Endothelial cell of umbilical vein (primary cell): ENCODE measurements at regions of chr13 and their contacts with region 1.

Region 1: GRCh38 chr13:28324181-28324789 is 170.6 kb downstream of the FLT1 start:
- DNase-seq: peak; percentile 80
- H3K4me3 ChIP-seq: no peak overlapping the region
- H3K27ac ChIP-seq: peak overlapping the region; percentile 86
- H3K4me1 ChIP-seq: peaks cover 63% of the 10 kb centered on the region
- H3K27me3 ChIP-seq: no peaks in the 10 kb centered on the region
- CTCF ChIP-seq: peak; percentile 81 to 87
- POLR2A ChIP-seq: no peak

Region 2: GRCh38 chr13:28337166-28338005 is 13.1 kb after region 1 on chr13:
- CTCF ChIA-PET with region 1: interaction called, 22 read pairs
- POLR2A ChIA-PET with region 1: interaction called, 11 read pairs
- dilution Hi-C with region 1: no loop called
- intact Hi-C with region 1: loop called (anchors 1 kb)
- DNase-seq: peak; percentile 97
- H3K4me3 ChIP-seq: no peak overlapping the region
- H3K27ac ChIP-seq: peak overlapping the region; percentile 80
- H3K4me1 ChIP-seq: peaks cover 74% of the 10 kb centered on the region
- H3K27me3 ChIP-seq: no peaks in the 10 kb centered on the region
- CTCF ChIP-seq: no peak
- POLR2A ChIP-seq: no peak

Region 3: GRCh38 chr13:28401303-28402056 is 77.2 kb after region 1 on chr13:
- CTCF ChIA-PET with region 1: interaction called, 11 read pairs
- POLR2A ChIA-PET with region 1: no interaction called
- dilution Hi-C with region 1: no loop called
- intact Hi-C with region 1: loop called (anchors 1 kb)
- DNase-seq: peak; percentile 93
- H3K4me3 ChIP-seq: peak overlapping the region in 1 of 3 experiments; percentile 30
- H3K27ac ChIP-seq: peak overlapping the region; percentile 99
- H3K4me1 ChIP-seq: peaks cover 54% of the 10 kb centered on the region
- H3K27me3 ChIP-seq: no peaks in the 10 kb centered on the region
- CTCF ChIP-seq: no peak
- POLR2A ChIP-seq: no peak

Region 4: GRCh38 chr13:28494776-28495537 is 170.7 kb after region 1 on chr13 and contains the start of gene FLT1:
- CTCF ChIA-PET with region 1: interaction called, 12 read pairs
- POLR2A ChIA-PET with region 1: interaction called, 3 read pairs
- dilution Hi-C with region 1: loop called (anchors 25 kb)
- intact Hi-C with region 1: loop called (anchors 1 kb)
- DNase-seq: peak; percentile 74
- H3K4me3 ChIP-seq: peak within 1 kb of the TSS; percentile 95 to 98 (median 96)
- H3K27ac ChIP-seq: peak within 1 kb of the TSS; percentile 85
- H3K4me1 ChIP-seq: peaks cover 44% of the 10 kb centered on the region
- H3K27me3 ChIP-seq: no peaks in the 10 kb centered on the region
- CTCF ChIP-seq: no peak
- POLR2A ChIP-seq: peak; percentile 90
- total RNA-seq, gene FLT1: 104 and 178 TPM in 2 replicates

Region 5: DNA sequence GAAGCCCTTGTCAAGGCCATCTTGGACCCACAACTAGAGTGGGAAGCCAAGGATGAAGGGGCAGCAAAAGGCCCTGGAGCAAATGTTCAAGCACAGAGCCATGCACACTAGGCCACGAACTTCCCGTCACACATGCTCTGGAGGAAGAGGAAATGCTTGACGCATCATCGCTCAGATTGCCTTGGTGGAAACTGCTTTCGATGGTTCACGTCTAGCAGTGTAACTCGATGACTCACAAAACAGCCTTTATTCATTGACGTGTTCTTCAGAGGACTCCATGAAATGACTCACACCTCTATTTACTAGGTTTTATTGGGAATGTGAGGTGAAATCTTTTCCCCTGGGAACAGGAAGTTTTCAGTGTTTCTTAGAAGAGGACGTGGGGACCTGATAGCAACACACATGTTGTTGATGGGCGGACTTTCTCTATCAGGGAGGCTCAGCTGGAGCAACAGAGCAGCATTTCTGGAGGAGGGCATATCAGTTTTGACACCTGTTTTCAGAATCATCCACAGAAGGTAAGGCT is 250.4 kb after region 1 on chr13:
- CTCF ChIA-PET with region 1: no interaction called
- POLR2A ChIA-PET with region 1: no interaction called
- dilution Hi-C with region 1: no loop called
- intact Hi-C with region 1: loop called (anchors 1 kb)
- DNase-seq: peak; percentile 98
- H3K4me3 ChIP-seq: no peak overlapping the region
- H3K27ac ChIP-seq: peak overlapping the region; percentile 99
- H3K4me1 ChIP-seq: peaks cover 10% of the 10 kb centered on the region
- H3K27me3 ChIP-seq: no peaks in the 10 kb centered on the region
- CTCF ChIP-seq: no peak
- POLR2A ChIP-seq: no peak